OCI-LY7 (cell line): ENCODE measurements at regions of chr1 and their contacts with region 1.

Region 1: GRCh38 chr1:72037745-72038343 is 244.5 kb downstream of the NEGR1 start:
- DNase-seq: peak; percentile 45
- H3K4me3 ChIP-seq: no peak overlapping the region
- H3K27ac ChIP-seq: no peak overlapping the region
- H3K4me1 ChIP-seq: no peaks in the 10 kb centered on the region
- CTCF ChIP-seq: peak; percentile 82

Region 2: GRCh38 chr1:71093938-71094337 is 943.9 kb before region 1 on chr1:
- CTCF ChIA-PET with region 1: no interaction called
- POLR2A ChIA-PET with region 1: no interaction called
- intact Hi-C with region 1: loop called (anchors 5 kb)
- DNase-seq: no peak
- H3K4me3 ChIP-seq: no peak overlapping the region
- H3K27ac ChIP-seq: no peak overlapping the region
- H3K4me1 ChIP-seq: no peaks in the 10 kb centered on the region
- CTCF ChIP-seq: peak; percentile 61

Region 3: DNA sequence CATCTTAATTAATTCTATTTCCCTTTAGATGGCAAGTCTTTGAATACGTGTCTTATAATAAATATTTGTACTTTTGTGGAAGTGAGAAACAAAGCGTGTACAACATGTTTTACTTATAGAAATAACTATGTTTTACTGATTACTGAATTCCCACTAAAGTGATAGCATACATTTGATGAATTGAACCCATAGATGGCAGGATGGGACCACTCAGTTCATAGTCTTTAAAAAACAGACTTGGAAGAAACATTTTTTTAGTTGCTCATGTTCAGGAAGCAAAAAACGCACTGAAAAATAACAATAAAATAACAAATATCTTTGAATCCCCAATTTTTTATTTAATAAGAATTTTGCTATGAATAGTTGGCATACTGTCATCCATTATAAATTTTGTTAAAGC is 449.9 kb before region 1 on chr1:
- CTCF ChIA-PET with region 1: no interaction called
- POLR2A ChIA-PET with region 1: no interaction called
- intact Hi-C with region 1: loop called (anchors 2 kb)
- DNase-seq: no peak
- H3K4me3 ChIP-seq: no peak overlapping the region
- H3K27ac ChIP-seq: no peak overlapping the region
- H3K4me1 ChIP-seq: no peaks in the 10 kb centered on the region
- CTCF ChIP-seq: peak; percentile 24; the same call in 1 of the 2 replicates

Region 4: GRCh38 chr1:71861022-71861421 is 176.8 kb before region 1 on chr1:
- CTCF ChIA-PET with region 1: no interaction called
- POLR2A ChIA-PET with region 1: no interaction called
- intact Hi-C with region 1: no loop called
- DNase-seq: no peak
- H3K4me3 ChIP-seq: no peak overlapping the region
- H3K27ac ChIP-seq: no peak overlapping the region
- H3K4me1 ChIP-seq: no peaks in the 10 kb centered on the region
- CTCF ChIP-seq: no peak

Region 5: GRCh38 chr1:71986160-71986559 is 51.7 kb before region 1 on chr1:
- CTCF ChIA-PET with region 1: no interaction called
- POLR2A ChIA-PET with region 1: no interaction called
- intact Hi-C with region 1: no loop called
- DNase-seq: no peak
- H3K4me3 ChIP-seq: no peak overlapping the region
- H3K27ac ChIP-seq: no peak overlapping the region
- H3K4me1 ChIP-seq: no peaks in the 10 kb centered on the region
- CTCF ChIP-seq: no peak

Region 6: GRCh38 chr1:72166426-72166825 is 128.6 kb after region 1 on chr1:
- CTCF ChIA-PET with region 1: no interaction called
- POLR2A ChIA-PET with region 1: no interaction called
- intact Hi-C with region 1: no loop called
- DNase-seq: no peak
- H3K4me3 ChIP-seq: no peak overlapping the region
- H3K27ac ChIP-seq: no peak overlapping the region
- H3K4me1 ChIP-seq: no peaks in the 10 kb centered on the region
- CTCF ChIP-seq: no peak